ENCODE measurements at regions of chr17 and their contacts with region 1.

Region 1: DNA sequence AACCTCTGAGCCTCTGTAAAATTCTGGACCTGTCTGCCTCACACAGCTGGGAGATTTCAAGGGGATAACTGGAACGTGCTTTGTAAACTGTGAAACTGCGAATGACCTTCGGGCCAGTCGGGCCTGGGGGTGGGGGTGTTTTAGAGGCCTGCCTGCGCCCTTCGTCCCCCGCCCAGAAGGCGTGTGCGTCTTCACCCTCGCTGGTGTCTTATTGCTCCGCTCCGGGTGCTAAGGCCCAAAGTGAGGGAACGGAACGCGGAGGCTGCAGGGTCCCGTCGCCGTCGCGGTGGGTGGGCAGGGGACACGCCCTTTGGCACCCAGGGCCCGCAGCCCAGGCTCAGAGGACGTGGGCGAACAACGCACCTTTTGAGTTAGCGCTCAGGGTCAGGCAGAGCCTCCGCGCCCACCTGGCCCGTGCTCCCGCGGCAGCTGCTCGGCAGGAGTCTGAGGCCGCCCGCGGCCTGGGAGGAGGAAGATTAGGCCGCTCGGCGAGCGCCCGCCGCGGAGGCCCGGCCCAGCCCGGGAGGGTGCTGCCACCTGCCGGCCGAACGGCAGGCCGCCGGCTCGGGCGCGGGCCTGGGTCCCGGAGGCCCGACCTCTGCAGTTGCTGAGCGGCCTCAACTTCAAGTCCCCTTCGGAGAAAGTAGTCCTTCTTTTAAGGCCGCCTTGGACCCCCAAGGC is 29.7 kb downstream of the DCAKD start:
- DNase-seq: peak; percentile 86
- ATAC-seq: peak; percentile 80

Region 2: DNA sequence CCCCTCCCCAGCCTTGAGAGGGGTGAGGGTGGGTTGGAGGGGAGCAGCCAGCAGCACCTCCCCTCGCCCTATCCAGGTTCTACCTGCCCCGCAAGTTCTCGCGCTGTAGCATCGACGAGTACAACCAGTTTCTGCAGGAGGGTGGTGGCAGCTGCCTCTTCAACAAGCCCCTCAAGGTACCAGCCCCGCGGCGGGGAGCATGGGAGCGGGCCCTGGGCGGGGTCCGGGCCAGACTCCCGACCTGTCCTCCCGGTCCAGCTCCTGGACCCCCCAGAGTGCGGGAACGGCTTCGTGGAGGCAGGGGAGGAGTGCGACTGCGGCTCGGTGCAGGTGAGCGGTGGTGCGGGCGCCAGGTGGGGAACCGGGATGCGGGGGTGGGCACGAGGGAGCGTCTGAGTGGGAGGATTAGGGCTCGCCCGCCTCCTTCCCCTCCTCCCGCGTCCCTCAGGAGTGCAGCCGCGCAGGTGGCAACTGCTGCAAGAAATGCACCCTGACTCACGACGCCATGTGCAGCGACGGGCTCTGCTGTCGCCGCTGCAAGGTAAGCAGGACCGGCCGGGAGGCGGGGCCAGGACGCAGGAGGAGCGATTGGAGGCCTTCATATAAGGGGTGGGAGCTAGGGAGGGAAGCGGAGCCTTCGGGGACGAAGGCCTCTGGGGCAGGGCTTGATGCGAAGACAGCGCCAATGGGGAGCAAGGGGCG is 246.5 kb before region 1 on chr17:
- intact Hi-C with region 1: loop called (anchors 2 kb)
- DNase-seq: peak; percentile 98
- ATAC-seq: peak; percentile 96

Region 3: DNA sequence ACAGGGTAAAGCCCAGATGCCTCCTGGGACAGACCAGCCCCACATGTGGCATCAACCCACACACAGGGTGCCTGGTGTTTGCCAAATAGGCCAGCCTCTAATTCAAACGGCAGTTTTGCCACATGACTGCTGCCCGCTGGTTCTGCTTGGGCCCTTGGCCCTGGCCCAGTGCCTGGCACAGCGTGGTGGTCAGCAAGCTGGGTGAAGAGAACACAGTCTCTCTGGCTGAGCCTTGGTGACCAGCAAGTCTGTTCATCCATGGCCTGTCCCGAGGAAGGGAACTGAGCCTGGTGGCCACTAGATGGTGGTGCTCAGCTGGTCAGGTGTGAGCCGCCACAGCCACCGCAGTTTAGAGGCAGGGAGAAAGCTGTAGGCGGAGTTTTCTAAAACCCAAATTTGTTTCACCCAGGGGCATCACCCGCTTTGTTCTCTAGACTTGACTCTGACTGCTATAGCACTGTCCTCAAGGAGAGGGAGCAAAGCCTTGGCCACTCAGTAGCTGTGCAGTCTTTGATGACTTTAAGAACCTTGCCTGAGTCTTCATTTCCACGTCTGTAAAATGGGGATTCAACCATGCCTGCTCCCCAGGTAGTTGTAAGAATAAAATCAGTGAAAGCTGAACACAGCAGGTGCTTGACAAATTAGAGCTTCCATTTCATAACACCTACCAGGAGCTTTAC is 101.7 kb before region 1 on chr17:
- intact Hi-C with region 1: loop called (anchors 1 kb)
- DNase-seq: peak; percentile 87
- ATAC-seq: peak; percentile 82

Region 4: DNA sequence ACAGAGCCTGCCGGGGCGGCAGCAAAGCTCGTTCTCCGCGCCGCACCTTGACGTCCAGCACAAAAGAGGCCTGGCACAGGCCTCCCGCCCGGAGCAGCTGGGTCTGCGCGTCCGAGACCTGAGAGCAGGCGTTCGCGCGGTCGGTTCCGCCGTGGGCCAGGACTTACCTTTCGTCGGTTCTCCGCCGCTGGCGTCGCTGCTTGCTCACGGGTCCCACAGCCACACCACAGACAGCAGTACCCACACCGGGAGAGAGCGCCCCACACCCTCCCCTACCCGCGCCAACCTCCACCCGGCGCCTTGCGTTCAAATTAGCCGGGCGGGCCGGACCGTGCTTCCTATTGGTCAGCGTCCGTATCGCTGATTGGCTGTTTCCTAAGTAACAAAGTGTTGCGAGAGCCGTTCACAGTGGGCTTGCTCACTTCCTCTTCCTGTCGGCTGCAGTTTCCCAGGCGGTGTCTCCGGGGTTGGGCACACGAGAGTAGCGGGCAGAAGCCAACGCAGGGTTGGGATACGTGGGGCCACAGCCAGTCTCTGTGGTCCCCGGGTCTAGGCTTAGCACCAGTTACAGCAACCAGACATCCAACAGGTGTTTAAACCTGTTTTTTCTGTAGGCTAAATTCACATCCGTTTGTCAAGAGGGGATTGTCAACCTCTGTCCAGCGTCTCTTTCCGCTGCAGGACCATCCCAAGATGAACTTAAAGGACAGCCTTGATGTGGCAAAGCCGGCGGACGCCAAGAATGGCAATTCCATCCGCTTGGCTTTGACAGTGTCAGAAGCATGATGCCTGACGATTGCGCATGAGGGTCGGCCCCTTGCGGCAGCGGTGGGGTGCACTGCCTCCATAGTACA is 74.1 kb before region 1 on chr17 and contains the start of gene KIF18B:
- intact Hi-C with region 1: no loop called
- DNase-seq: peak; percentile 95
- ATAC-seq: peak; percentile 98
- total RNA-seq, gene KIF18B: 2.5 TPM

Region 5: GRCh38 chr17:44968226-44969143 is 53.3 kb before region 1 on chr17 and contains the start of gene C1QL1:
- intact Hi-C with region 1: loop called (anchors 5 kb)
- DNase-seq: peak; percentile 95
- ATAC-seq: peak; percentile 98
- total RNA-seq, gene C1QL1: 11.3 TPM

Region 6: GRCh38 chr17:44981221-44981968 is 40.4 kb before region 1 on chr17:
- intact Hi-C with region 1: loop called (anchors 2 kb)
- DNase-seq: no peak
- ATAC-seq: no peak

Region 7: DNA sequence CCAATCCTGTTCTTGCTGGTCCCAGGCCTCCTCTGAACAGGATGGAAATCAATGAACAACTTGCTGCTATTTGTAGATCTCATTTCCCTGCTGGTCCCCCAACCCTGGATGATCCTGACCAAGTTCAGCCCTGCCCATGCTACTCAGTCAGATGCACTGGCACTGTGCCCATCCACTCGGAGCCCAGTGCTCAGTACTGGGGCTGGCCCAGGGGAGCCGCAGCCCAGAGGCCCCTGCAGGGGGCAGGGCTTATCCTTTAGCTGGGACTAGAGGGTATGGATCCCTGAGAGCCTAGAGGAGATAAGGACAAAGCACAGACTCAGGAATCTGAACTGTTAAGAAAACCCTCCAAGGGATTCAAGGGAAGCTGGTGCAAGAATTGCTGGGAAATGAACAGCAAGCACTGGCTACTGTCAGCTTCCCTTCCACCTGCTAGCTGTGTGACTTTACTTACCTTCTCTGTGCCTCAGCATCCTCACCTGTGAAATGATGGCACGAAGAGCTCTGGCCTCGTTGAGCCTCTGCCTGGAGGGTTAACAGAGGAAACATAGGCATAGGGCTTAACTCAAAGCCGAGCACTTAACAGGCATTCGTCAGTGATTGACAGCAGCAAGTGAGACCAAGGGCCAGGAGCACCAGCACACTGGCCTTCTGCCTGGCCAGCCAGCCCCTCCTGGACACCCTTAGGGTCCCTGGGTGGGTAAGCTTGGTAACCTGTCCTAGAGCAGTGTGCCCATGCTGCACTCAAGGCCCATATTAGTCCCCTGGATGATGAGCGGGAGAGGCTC is 23.8 kb before region 1 on chr17:
- intact Hi-C with region 1: no loop called
- DNase-seq: no peak
- ATAC-seq: peak; percentile 61

Region 8: GRCh38 chr17:45048795-45049563 is 27.2 kb after region 1 on chr17:
- intact Hi-C with region 1: no loop called
- DNase-seq: no peak
- ATAC-seq: no peak

Region 9: GRCh38 chr17:45098869-45099616 is 77.3 kb after region 1 on chr17:
- intact Hi-C with region 1: loop called (anchors 5 kb)
- DNase-seq: peak; percentile 93
- ATAC-seq: peak; percentile 80

Region 10: GRCh38 chr17:45135192-45135977 is 113.6 kb after region 1 on chr17 and contains the start of gene ACBD4:
- intact Hi-C with region 1: loop called (anchors 5 kb)
- DNase-seq: peak; percentile 98
- ATAC-seq: peak; percentile 79
- total RNA-seq, gene ACBD4: 6.7 TPM